HEK293 (cell line): ENCODE measurements at regions of chr2 and their contacts with region 1.

Region 1: GRCh38 chr2:231227309-231228162 is 29.1 kb downstream of the ARMC9 start:
- H3K4me3 ChIP-seq: no peak overlapping the region
- H3K27ac ChIP-seq: no peak overlapping the region
- H3K4me1 ChIP-seq: peaks cover 6% of the 10 kb centered on the region; the same call in 1 of the 2 replicates
- CTCF ChIP-seq: peak; percentile 70

Region 2: DNA sequence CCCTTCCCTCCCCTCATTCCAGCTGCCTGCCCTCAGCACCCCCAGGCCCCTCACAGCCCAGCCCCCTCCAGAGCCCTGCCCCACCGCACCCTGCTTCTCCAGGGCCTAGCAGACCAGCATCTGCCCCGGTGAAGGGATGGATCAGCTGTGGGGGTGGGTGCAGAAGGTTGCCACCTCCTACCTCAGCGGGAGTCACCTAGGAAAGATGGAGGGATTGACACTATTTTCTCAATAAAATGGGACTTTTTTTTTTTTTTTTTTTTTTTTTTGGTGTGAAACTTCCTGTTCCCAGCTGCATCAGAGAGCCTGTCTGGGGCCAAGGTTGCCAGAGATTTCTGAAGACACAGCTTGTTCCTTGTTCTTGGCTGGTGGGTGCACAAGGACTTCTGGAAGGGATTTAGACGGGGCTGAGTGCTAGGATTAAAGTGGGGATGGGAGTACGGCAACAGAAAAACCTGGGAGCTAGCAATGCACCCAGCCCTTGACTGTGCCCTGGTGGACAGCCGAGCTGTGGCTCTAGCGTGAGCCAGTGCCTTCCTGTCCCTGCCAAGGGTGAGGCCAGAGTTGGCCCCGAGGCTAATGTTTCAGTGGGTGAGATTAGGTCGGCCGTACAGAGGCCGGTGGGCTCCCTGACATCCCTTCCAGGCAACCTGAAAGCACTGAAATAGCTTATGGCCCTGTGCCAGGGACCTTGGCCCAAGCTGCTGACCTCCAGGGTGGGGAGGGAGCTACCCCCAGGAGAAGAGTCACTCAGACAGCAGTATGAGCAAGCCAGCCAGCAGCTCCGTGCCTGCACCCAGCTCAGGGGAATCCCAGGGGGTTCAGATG is 172.5 kb after region 1 on chr2:
- CTCF ChIA-PET with region 1: interaction called, 11 read pairs
- POLR2A ChIA-PET with region 1: no interaction called
- H3K4me3 ChIP-seq: no peak overlapping the region
- H3K27ac ChIP-seq: no peak overlapping the region
- H3K4me1 ChIP-seq: no peaks in the 10 kb centered on the region
- CTCF ChIP-seq: no peak

Region 3: GRCh38 chr2:231452799-231453508 is 225.4 kb after region 1 on chr2:
- CTCF ChIA-PET with region 1: interaction called, 41 read pairs
- POLR2A ChIA-PET with region 1: interaction called, 8 read pairs
- H3K4me3 ChIP-seq: no peak overlapping the region
- H3K27ac ChIP-seq: 0 out of 2 replicates have a peak overlapping the region, but pooled peaks have one; percentile 7
- H3K4me1 ChIP-seq: no peaks in the 10 kb centered on the region
- CTCF ChIP-seq: no peak

Region 4: DNA sequence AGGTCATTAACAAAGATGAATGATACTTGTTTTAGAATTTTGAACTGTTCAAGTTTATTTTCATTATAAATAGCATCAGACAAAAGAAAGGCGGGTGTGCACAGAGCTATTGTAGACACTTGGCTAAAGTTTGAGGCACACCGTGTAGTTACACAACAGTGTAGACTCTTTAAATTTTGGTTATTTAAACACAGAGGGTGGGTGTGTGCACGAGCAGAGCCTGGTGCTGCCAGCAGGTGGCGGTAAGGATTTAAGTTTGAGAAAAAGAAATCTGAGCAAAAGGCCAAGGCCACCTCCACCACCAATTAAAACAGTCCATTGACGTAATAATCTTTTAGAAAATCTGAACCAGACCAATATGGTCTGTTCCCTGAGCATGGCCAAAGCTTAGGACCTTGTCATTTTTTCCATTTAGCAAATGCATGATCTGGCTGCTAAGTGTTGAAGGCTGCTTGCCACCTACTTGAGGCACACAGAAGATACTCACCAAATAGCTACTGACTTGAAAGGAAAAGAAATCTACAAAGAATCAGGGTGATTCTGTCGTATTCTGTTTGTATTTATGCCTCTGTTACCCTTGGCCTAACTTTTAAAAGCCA is 573.1 kb after region 1 on chr2:
- CTCF ChIA-PET with region 1: no interaction called
- POLR2A ChIA-PET with region 1: no interaction called
- H3K4me3 ChIP-seq: no peak overlapping the region
- H3K27ac ChIP-seq: no peak overlapping the region
- H3K4me1 ChIP-seq: no peaks in the 10 kb centered on the region
- CTCF ChIP-seq: no peak; the same call in 1 of the 2 replicates